Mammary epithelial cell (primary cell): ENCODE measurements at regions of chr14 and their contacts with region 1.

Region 1: GRCh38 chr14:52961060-52961639 is 10.3 kb upstream of the FERMT2 start:
- DNase-seq: peak; percentile 53
- H3K4me3 ChIP-seq: no peak overlapping the region
- H3K27ac ChIP-seq: no peak overlapping the region
- H3K4me1 ChIP-seq: no peaks in the 10 kb centered on the region
- H3K27me3 ChIP-seq: no peaks in the 10 kb centered on the region
- CTCF ChIP-seq: peak; percentile 66 to 82

Region 2: DNA sequence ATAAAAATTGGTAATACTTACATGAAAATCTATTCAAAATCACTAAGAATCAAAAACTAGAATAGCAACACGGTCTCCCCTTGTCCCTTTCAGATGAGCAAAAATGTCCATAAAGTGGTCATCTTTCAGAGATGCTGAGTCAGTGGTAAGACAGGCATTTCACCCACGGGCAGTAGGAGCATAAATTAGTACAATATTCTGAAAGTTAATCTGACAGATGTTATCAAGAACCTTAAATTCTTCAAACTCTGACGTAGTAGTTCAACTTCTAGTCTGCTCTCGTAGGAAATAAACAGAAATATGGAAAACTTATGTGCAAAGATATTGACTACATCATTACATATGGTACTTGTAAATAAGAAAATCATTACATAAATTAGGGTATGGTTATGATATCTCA is 136.6 kb before region 1 on chr14:
- CTCF ChIA-PET with region 1: no interaction called
- dilution Hi-C with region 1: no loop called
- in situ Hi-C with region 1: loop called (anchors 5 kb)
- intact Hi-C with region 1: loop called (anchors 1 kb)
- DNase-seq: no peak
- H3K4me3 ChIP-seq: no peak overlapping the region
- H3K27ac ChIP-seq: no peak overlapping the region
- H3K4me1 ChIP-seq: no peaks in the 10 kb centered on the region
- H3K27me3 ChIP-seq: no peaks in the 10 kb centered on the region
- CTCF ChIP-seq: no peak

Region 3: DNA sequence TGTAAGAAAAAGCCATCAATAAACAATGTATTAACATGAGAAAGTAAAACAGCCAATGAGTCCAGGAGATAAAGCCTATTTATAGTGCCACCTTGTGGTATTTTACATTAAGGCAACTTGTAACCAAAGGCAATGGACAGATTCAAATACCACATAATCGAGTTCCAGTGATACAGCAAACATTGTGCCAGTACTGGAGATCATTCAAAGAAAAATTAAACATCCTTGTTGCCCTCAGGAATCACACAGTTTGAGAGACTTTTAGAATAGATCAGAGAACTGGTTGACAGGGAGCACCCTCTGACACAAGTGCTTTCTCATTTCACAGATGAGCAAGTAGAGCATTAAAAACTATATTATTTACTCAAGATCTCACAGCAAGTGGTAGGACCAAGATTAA is 93.9 kb after region 1 on chr14:
- CTCF ChIA-PET with region 1: no interaction called
- dilution Hi-C with region 1: no loop called
- in situ Hi-C with region 1: no loop called
- intact Hi-C with region 1: loop called (anchors 2 kb)
- DNase-seq: peak; percentile 40
- H3K4me3 ChIP-seq: no peak overlapping the region
- H3K27ac ChIP-seq: no peak overlapping the region
- H3K4me1 ChIP-seq: no peaks in the 10 kb centered on the region
- H3K27me3 ChIP-seq: no peaks in the 10 kb centered on the region
- CTCF ChIP-seq: peak; percentile 72 to 82

Region 4: GRCh38 chr14:53144244-53144643 is 183.1 kb after region 1 on chr14:
- CTCF ChIA-PET with region 1: interaction called, 11 read pairs
- dilution Hi-C with region 1: no loop called
- in situ Hi-C with region 1: no loop called
- intact Hi-C with region 1: no loop called
- DNase-seq: no peak
- H3K4me3 ChIP-seq: no peak overlapping the region
- H3K27ac ChIP-seq: no peak overlapping the region
- H3K4me1 ChIP-seq: peaks cover 5% of the 10 kb centered on the region
- H3K27me3 ChIP-seq: no peaks in the 10 kb centered on the region
- CTCF ChIP-seq: no peak

Region 5: DNA sequence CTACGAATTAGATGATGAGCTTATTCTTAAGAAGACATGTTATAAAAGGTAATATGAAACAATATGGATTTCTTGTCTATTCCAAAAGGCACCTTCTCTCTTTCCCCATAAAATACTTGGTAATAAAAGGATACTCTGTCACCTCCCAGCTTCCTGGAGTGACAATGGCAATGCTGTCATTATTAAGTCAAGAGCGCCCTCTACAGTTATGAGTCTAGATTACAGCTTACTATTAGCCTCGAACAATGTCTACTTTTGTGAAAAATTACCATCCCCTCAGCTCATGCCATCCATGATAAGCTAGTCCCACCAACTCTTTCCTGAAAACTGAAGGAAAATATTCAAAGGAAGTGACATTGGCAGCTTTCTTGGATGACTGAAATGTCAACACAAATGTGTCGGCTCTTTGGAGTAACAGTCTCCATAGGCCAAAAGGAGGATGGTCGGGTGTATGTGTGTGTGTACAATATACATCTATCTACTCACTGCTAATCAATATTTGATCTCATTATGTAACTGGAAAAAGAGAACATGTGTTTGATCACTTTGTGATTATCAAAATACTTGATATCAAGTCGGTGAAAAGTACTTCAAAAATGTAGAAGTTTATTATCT is 1387.0 kb after region 1 on chr14:
- CTCF ChIA-PET with region 1: interaction called, 3 read pairs
- dilution Hi-C with region 1: no loop called
- in situ Hi-C with region 1: no loop called
- intact Hi-C with region 1: loop called (anchors 5 kb)
- DNase-seq: peak; percentile 29
- H3K4me3 ChIP-seq: no peak overlapping the region
- H3K27ac ChIP-seq: no peak overlapping the region
- H3K4me1 ChIP-seq: no peaks in the 10 kb centered on the region
- H3K27me3 ChIP-seq: no peaks in the 10 kb centered on the region
- CTCF ChIP-seq: peak; percentile 73 to 82